Caco-2 (cell line): ENCODE measurements at regions of chr1 and their contacts with region 1.

Region 1: GRCh38 chr1:95084317-95085176 is 11.8 kb upstream of the ALG14 start:
- DNase-seq: peak in 1 of 2 experiments; percentile 16
- H3K4me3 ChIP-seq: no peak overlapping the region
- H3K4me3 Mint-ChIP-seq: no peak overlapping the region
- H3K27ac Mint-ChIP-seq: no peak overlapping the region
- H3K4me1 ChIP-seq: peaks cover 34% of the 10 kb centered on the region
- H3K4me1 Mint-ChIP-seq: peaks cover 18% of the 10 kb centered on the region
- H3K27me3 ChIP-seq: no peaks in the 10 kb centered on the region
- H3K27me3 Mint-ChIP-seq: no peaks in the 10 kb centered on the region
- CTCF ChIP-seq: peak; percentile 35 to 48

Region 2: GRCh38 chr1:95116580-95117206 is 32.1 kb after region 1 on chr1:
- CTCF ChIA-PET with region 1: interaction called, 5 read pairs
- POLR2A ChIA-PET with region 1: no interaction called
- intact Hi-C with region 1: loop called (anchors 2 kb)
- DNase-seq: peak; percentile 79
- H3K4me3 ChIP-seq: peak overlapping the region; percentile 59
- H3K4me3 Mint-ChIP-seq: peak overlapping the region; percentile 75
- H3K27ac Mint-ChIP-seq: peak overlapping the region; percentile 55
- H3K4me1 ChIP-seq: peaks cover 27% of the 10 kb centered on the region
- H3K4me1 Mint-ChIP-seq: peaks cover 14% of the 10 kb centered on the region
- H3K27me3 ChIP-seq: no peaks in the 10 kb centered on the region
- H3K27me3 Mint-ChIP-seq: no peaks in the 10 kb centered on the region
- CTCF ChIP-seq: peak; percentile 52 to 68

Region 3: GRCh38 chr1:95127380-95127779 is 42.8 kb after region 1 on chr1:
- CTCF ChIA-PET with region 1: no interaction called
- POLR2A ChIA-PET with region 1: no interaction called
- intact Hi-C with region 1: no loop called
- DNase-seq: no peak
- H3K4me3 ChIP-seq: no peak overlapping the region
- H3K4me3 Mint-ChIP-seq: no peak overlapping the region
- H3K27ac Mint-ChIP-seq: no peak overlapping the region
- H3K4me1 ChIP-seq: peaks cover 10% of the 10 kb centered on the region; the same call in 1 of the 2 replicates
- H3K4me1 Mint-ChIP-seq: peaks cover 7% of the 10 kb centered on the region
- H3K27me3 ChIP-seq: no peaks in the 10 kb centered on the region
- H3K27me3 Mint-ChIP-seq: no peaks in the 10 kb centered on the region
- CTCF ChIP-seq: no peak

Region 4: GRCh38 chr1:95257758-95258157 is 173.2 kb after region 1 on chr1:
- CTCF ChIA-PET with region 1: no interaction called
- POLR2A ChIA-PET with region 1: no interaction called
- intact Hi-C with region 1: loop called (anchors 1 kb)
- DNase-seq: peak; percentile 63 to 72
- H3K4me3 ChIP-seq: no peak overlapping the region
- H3K4me3 Mint-ChIP-seq: peak overlapping the region; percentile 17
- H3K27ac Mint-ChIP-seq: peak overlapping the region; percentile 1
- H3K4me1 ChIP-seq: peaks cover 39% of the 10 kb centered on the region
- H3K4me1 Mint-ChIP-seq: peaks cover 22% of the 10 kb centered on the region
- H3K27me3 ChIP-seq: no peaks in the 10 kb centered on the region
- H3K27me3 Mint-ChIP-seq: no peaks in the 10 kb centered on the region
- CTCF ChIP-seq: no peak